Activated CD4-positive, alpha-beta T cell treated with anti-CD3 and anti-CD28 coated beads for 36 hours (primary cell): ENCODE measurements at regions of chr11 and their contacts with region 1.

Region 1: DNA sequence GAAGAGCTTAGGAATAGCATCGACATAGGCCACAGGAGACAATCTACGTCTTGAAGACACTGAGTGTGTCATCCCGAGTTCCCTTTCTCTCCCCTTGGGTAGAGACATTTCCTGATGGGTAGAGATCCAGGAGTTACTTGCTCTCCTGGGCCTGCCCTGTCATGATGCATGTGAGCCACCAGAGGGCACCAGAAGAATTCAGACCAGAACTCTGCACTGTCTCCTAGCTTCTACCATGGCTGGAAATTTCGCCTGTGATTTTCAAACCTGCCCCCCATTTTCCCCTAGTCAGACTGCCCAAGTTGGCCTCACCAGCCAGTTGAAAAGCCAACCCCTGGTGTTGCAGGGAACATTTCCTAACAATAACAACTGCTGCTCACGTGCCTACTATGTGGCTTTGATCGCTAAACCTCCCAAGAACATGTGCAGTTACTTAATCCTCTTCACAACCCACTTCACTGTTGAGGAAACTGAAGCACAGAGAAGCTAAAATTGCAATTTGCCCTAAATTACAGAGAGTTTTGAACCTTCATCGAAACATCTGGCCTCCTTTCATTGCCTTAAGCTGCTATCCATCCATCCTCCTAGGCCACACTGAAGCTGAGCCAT is 47.2 kb downstream of the C11orf58 start:
- DNase-seq: peak; percentile 77
- ATAC-seq: peak; percentile 80
- H3K4me3 Mint-ChIP-seq: no peak overlapping the region
- H3K27ac Mint-ChIP-seq: no peak overlapping the region
- H3K4me1 Mint-ChIP-seq: no peaks in the 10 kb centered on the region
- H3K27me3 Mint-ChIP-seq: no peaks in the 10 kb centered on the region

Region 2: GRCh38 chr11:16678466-16679116 is 107.0 kb before region 1 on chr11:
- CTCF ChIA-PET with region 1: no interaction called
- POLR2A ChIA-PET with region 1: no interaction called
- intact Hi-C with region 1: no loop called
- DNase-seq: no peak
- ATAC-seq: no peak
- H3K4me3 Mint-ChIP-seq: no peak overlapping the region
- H3K27ac Mint-ChIP-seq: no peak overlapping the region
- H3K4me1 Mint-ChIP-seq: no peaks in the 10 kb centered on the region
- H3K27me3 Mint-ChIP-seq: peaks cover 16% of the 10 kb centered on the region

Region 3: DNA sequence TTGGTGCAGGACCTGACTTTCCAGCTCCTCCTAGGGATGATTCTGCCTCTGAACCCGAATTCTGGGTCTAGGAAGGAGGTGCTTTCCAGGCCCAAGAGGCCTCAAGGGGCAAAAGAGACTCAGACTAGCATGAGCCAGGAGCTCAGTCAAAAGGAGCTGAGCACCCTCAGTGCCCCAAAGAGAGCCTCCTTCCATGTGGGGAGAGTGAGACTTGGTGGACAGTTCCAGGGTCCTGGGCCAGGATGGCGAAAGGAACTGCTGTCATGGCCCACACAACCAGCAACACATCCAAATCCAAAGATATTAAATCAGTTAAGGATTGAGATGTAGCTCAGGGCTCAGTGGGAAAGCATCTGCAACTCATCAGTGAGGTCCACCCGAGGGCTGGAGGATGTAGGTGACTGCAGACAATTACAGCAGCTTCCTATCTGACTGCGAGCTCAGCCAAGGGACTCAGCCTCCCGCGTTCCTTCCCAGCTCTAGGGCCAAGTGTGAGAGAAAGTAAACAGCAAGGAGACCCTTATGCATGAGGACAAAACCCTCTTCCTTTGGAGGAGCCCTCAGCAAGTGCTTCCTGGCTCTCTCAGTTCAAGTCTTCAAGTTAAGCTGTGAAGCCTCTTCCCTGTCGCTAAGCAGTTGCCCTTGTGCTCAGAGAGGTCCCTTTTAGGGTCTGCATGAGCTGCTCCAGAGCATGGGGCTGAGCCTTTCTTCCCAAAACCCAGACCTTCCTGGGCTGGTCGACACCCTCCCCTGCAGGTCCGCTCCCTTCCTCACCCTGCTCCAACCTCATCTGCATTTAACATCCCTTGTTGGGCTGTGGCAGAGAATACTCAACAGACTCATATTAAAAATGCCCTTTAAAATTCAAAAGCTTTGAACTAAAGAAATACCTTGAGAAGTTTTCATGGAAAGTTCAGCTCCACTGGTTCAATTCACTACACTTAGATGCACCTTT is 11.4 kb before region 1 on chr11:
- CTCF ChIA-PET with region 1: interaction called, 11 read pairs
- POLR2A ChIA-PET with region 1: no interaction called
- intact Hi-C with region 1: no loop called
- DNase-seq: no peak
- ATAC-seq: no peak
- H3K4me3 Mint-ChIP-seq: no peak overlapping the region
- H3K27ac Mint-ChIP-seq: no peak overlapping the region
- H3K4me1 Mint-ChIP-seq: no peaks in the 10 kb centered on the region
- H3K27me3 Mint-ChIP-seq: no peaks in the 10 kb centered on the region

Region 4: GRCh38 chr11:16801288-16801980 is 15.8 kb after region 1 on chr11:
- CTCF ChIA-PET with region 1: interaction called, 14 read pairs
- POLR2A ChIA-PET with region 1: interaction called, 4 read pairs
- intact Hi-C with region 1: no loop called
- DNase-seq: no peak
- ATAC-seq: no peak
- H3K4me3 Mint-ChIP-seq: no peak overlapping the region
- H3K27ac Mint-ChIP-seq: no peak overlapping the region
- H3K4me1 Mint-ChIP-seq: peaks cover 10% of the 10 kb centered on the region
- H3K27me3 Mint-ChIP-seq: no peaks in the 10 kb centered on the region

Region 5: GRCh38 chr11:16935518-16936302 is 150.1 kb after region 1 on chr11:
- CTCF ChIA-PET with region 1: interaction called, 6 read pairs
- POLR2A ChIA-PET with region 1: no interaction called
- intact Hi-C with region 1: loop called in 1 of 2 experiments (anchors 5 kb)
- DNase-seq: peak; percentile 61
- ATAC-seq: peak; percentile 86
- H3K4me3 Mint-ChIP-seq: no peak overlapping the region
- H3K27ac Mint-ChIP-seq: no peak overlapping the region
- H3K4me1 Mint-ChIP-seq: no peaks in the 10 kb centered on the region
- H3K27me3 Mint-ChIP-seq: peaks cover 7% of the 10 kb centered on the region

Region 6: DNA sequence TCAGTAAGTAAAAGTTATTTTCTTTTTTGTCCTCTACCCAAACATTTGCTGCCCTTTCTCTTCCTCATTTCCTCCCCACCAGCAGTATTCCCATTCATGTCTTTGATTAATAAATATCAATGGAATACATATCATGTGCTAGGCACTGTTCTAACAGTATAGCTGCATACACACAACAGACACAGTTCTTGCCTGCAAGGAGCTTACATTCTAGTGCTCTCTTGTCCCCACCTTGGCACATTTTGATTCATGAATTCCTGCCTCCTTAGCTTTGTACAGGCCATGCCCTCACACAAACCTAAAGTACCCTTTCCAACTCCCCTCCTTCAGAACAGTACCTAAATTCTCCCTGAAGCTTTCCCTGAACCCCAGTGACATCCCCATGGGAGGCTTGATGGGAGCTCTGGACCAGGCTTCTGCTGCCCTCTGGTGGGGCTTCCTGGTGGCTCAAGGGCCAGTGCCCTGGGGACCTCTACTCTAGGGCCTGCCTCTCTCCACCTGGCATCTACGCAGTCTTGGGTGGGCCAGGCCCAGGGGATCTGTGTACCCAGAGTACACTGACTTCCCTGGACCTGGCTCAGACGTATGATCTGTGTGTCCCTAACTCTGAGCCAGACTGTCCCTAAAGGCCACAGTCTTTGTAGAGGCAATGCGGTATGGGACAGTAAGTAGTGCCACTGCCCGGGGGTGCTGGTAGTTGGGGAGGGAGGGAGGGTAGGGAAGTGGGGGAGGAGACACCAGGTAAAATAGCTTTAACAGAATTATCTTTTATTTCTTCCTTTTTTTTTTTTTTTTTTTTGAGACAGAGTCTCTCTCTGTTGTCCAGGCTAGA is 277.8 kb after region 1 on chr11:
- CTCF ChIA-PET with region 1: interaction called, 59 read pairs
- POLR2A ChIA-PET with region 1: no interaction called
- intact Hi-C with region 1: loop called (anchors 1 to 2 kb)
- DNase-seq: peak; percentile 80
- ATAC-seq: peak; percentile 89
- H3K4me3 Mint-ChIP-seq: no peak overlapping the region
- H3K27ac Mint-ChIP-seq: no peak overlapping the region
- H3K4me1 Mint-ChIP-seq: no peaks in the 10 kb centered on the region
- H3K27me3 Mint-ChIP-seq: no peaks in the 10 kb centered on the region

Region 7: GRCh38 chr11:17221968-17222367 is 436.3 kb after region 1 on chr11:
- CTCF ChIA-PET with region 1: no interaction called
- POLR2A ChIA-PET with region 1: no interaction called
- intact Hi-C with region 1: no loop called
- DNase-seq: no peak
- ATAC-seq: no peak
- H3K4me3 Mint-ChIP-seq: no peak overlapping the region
- H3K27ac Mint-ChIP-seq: no peak overlapping the region
- H3K4me1 Mint-ChIP-seq: no peaks in the 10 kb centered on the region
- H3K27me3 Mint-ChIP-seq: no peaks in the 10 kb centered on the region

Region 8: DNA sequence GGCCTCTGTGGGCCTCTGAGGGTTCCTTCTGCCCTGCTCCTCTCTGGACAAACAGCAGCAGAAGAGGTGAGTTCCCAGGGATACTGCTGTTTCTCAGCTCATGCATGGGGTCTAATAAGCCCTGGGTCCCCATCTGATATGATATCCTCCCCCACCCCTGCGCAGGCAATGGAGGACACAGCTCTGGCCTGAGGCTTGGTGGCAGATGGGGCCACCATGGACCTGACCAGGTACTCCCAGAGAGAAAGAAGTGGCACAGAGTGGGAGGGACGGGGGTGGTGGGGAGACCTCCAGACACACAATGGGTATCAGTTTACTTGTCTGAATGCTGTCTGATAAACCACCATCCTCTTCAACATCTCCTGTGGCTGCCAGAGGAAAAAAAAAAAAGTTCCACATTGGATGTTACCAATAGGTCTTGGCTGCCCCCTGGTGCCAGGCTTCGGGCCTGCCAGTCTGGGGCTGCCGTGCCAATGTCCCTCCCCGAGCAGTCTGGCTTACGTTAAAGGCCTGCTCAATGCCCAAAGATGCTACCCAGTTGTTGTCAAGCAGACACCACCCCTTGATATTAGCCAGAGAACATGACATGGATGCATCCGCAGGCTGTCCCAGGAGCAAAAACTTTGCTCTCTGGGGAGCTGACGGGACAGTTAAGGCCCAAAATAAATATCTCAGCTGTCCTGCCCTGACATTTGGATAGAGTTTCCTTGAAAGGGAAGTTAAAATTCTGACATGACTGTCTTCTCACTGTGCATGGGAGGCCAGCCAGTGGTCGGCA is 718.9 kb after region 1 on chr11:
- CTCF ChIA-PET with region 1: no interaction called
- POLR2A ChIA-PET with region 1: no interaction called
- intact Hi-C with region 1: loop called in 1 of 2 experiments (anchors 1 kb)
- DNase-seq: peak; percentile 88
- ATAC-seq: peak; percentile 90
- H3K4me3 Mint-ChIP-seq: no peak overlapping the region
- H3K27ac Mint-ChIP-seq: no peak overlapping the region
- H3K4me1 Mint-ChIP-seq: no peaks in the 10 kb centered on the region
- H3K27me3 Mint-ChIP-seq: peaks cover 7% of the 10 kb centered on the region